ENCODE measurements at regions of chr3 and their contacts with region 1.

Region 1: GRCh38 chr3:129052675-129053074 is 7.9 kb upstream of the GP9 start:
- DNase-seq: no peak
- H3K4me3 ChIP-seq: no peak overlapping the region
- H3K27ac ChIP-seq: peak overlapping the region; percentile 55 to 75
- H3K4me1 ChIP-seq: peaks cover 0 to 22% of the 10 kb centered on the region in 2 donors
- H3K27me3 ChIP-seq: no peaks in the 10 kb centered on the region
- CTCF ChIP-seq: no peak

Region 2: DNA sequence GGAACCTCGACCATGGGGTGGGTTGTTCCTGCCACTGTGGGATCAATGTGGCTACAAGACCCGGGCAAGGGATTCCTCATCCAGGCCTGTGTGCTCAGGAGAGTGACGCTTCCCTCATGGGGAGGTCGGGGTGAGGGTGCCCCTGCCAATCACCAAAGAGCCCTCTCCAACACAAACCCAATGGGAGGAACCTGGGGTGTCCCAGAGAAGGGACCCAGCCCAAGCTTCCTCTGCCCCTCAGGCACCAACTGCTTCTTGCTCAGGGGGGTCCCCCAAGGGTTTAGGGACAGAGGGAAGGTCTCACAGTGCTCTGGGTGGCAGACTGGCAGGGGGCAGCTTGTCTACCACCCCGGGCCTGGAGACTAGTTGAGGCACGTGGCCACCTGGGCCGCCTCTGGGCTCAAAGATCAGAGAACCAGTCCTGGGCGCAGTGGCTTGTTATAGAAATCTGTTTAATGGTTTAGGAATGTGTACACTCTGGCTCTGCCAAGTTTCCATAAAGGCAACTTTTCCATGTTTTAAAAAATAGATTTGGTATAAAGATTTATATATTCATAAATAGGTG is 34.5 kb after region 1 on chr3:
- intact Hi-C with region 1: loop called (anchors 2 kb)
- DNase-seq: peak in 1 of 2 donors; percentile 86
- H3K4me3 ChIP-seq: no peak overlapping the region
- H3K27ac ChIP-seq: peak overlapping the region; percentile 92 to 93
- H3K4me1 ChIP-seq: peaks cover 5 to 9% of the 10 kb centered on the region in 2 donors
- H3K27me3 ChIP-seq: no peaks in the 10 kb centered on the region
- CTCF ChIP-seq: no peak

Region 3: DNA sequence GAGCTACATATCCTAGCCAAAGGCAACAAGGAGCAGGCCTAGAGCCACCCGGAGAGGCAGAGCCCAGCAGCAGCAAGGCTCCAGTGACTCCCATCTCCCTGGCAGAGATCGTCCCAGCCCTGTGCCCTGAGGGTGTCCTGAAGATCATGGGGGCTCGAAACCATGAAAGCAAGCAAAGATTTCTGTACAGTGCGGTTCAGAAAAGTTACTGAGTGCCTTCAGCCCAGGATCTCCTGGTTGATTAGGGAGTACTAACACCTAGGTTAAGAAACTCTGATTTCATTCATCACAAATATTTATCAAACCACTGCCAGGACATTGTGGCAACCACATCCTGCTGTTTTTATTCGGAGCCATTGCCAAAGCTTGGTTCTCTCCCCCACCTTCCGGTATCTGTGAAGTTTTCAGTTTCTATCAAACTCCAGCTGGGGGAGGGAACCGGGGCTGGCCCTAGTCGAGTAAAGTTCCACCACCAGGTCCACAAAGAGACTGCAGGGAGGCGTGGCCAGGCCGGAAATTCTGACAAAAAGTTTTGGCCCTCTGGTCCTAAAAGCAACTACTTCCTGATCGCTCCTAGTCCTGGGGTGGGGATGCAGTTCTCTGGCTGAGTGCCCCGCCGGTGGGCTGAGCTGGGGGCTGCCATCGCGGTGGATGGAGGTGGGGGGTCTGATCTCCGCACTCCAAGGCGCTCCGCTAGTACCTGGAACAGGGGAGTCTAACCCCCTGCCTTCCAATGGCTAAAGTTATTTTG is 67.8 kb after region 1 on chr3:
- intact Hi-C with region 1: loop called (anchors 1 kb)
- DNase-seq: peak; percentile 74 to 96
- H3K4me3 ChIP-seq: peak overlapping the region; percentile 98 to 100
- H3K27ac ChIP-seq: peak overlapping the region; percentile 97 to 99
- H3K4me1 ChIP-seq: peaks cover 9 to 18% of the 10 kb centered on the region in 2 donors
- H3K27me3 ChIP-seq: no peaks in the 10 kb centered on the region
- CTCF ChIP-seq: peak; percentile 23 to 37 (median 29)

Region 4: DNA sequence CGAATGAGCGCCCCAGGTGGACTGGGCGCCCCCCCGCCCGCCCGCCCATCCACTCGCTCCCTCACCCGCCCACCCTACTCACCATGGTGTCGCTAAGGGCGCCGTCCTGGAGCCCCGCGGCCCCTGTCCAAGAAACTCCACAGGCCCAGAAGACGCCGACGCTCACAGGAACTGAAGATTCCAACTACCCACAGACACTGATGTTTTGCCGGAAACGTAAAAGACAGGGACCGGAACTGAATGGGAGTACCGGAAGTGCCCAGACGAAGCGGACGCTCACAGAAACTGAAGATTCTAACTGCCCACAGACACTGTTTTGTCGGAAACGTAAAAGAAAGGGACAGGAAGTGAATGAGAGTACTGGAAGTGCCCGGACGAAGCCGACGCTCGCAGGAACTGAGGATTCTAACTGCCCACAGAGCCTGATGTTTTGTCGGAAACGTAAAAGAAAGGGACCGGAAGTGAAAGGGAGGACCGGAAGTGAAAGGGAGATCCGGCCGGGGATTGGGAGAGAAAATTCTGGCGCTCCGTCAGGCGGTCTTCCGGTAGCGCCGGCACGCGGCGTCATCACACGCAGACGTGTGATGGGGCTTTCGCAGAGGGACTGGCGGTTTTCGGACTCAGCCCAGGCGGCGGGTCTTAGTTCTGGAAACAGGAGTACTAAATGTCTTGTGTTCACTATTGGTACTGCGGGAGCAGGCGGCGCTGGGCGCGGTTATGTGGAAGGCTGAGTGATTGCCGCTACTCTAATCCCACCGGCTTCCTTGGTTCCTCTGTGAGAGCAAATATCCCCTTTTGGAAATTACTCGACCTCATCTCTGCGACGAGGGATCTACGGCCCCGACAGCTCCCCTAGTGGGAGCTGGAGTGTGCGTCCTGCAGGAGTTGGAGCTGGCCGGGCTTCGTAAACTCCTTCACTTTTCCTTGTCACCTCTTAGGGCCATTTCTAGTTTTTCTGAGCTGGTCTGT is 108.5 kb after region 1 on chr3 and contains the start of gene ISY1:
- intact Hi-C with region 1: loop called (anchors 1 kb)
- DNase-seq: peak; percentile 47 to 93
- H3K4me3 ChIP-seq: peak within 1 kb of the TSS; percentile 79 to 97
- H3K27ac ChIP-seq: peak within 1 kb of the TSS; percentile 95 to 97
- H3K4me1 ChIP-seq: peaks cover 0 to 20% of the 10 kb centered on the region in 2 donors
- H3K27me3 ChIP-seq: no peaks in the 10 kb centered on the region
- CTCF ChIP-seq: peak; percentile 74 to 83 (median 80)
- total RNA-seq, gene ISY1: 22.5 TPM

Region 5: GRCh38 chr3:129263161-129264070 is 210.7 kb after region 1 on chr3:
- intact Hi-C with region 1: no loop called
- DNase-seq: no peak
- H3K4me3 ChIP-seq: no peak overlapping the region
- H3K27ac ChIP-seq: no peak overlapping the region
- H3K4me1 ChIP-seq: no peaks in the 10 kb centered on the region
- H3K27me3 ChIP-seq: no peaks in the 10 kb centered on the region
- CTCF ChIP-seq: no peak